ENCODE measurements at regions of chr12 and their contacts with region 1.

Region 1: DNA sequence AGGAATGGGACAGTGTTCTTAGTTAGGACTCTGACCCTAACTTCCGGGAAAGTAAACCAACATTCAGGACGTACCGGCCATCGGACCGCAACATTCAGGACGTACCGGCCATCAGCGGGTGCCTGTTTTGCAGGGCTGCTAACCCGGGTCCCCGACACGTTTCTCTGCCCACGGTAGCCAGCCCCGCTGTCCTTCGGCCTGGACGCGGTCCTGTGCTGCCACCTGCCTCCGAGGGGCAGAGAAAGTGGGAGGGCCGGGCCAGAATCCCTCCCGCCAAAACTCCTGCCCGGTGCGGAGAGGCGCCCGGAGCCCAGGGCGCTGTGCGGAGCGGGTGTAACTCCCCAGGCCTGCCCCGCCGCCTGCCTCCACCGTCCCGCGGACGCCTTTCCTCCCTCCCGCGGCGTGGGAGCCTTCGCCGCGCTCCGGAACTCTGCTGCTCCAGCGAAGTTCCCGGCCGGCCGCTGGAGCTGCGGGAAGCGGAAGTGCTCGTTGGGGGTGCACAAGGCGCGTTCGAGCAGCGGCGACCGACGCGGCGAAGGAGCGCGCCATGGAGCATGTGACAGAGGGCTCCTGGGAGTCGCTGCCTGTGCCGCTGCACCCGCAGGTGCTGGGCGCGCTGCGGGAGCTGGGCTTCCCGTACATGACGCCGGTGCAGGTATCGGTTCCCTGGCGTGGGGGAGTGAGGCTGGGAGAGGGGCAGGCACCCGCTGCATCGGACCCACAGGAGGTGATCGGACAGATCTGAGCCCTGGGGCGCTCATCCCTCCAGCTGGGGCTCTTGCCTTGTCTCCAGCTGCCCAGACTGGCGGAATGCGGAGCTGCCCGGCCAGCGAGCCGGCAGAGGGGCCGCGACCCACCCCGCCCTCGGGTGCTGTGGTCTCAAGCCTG is at the start of gene DDX55:
- DNase-seq: peak; percentile 89
- ATAC-seq: peak; percentile 95
- H3K4me3 Mint-ChIP-seq: peak within 1 kb of the TSS; percentile 90
- H3K27ac Mint-ChIP-seq: peak within 1 kb of the TSS; percentile 98
- H3K4me1 Mint-ChIP-seq: peaks cover 39% of the 10 kb centered on the region
- H3K27me3 Mint-ChIP-seq: no peaks in the 10 kb centered on the region
- total RNA-seq, gene DDX55: 44.7 to 44.8 TPM

Region 2: DNA sequence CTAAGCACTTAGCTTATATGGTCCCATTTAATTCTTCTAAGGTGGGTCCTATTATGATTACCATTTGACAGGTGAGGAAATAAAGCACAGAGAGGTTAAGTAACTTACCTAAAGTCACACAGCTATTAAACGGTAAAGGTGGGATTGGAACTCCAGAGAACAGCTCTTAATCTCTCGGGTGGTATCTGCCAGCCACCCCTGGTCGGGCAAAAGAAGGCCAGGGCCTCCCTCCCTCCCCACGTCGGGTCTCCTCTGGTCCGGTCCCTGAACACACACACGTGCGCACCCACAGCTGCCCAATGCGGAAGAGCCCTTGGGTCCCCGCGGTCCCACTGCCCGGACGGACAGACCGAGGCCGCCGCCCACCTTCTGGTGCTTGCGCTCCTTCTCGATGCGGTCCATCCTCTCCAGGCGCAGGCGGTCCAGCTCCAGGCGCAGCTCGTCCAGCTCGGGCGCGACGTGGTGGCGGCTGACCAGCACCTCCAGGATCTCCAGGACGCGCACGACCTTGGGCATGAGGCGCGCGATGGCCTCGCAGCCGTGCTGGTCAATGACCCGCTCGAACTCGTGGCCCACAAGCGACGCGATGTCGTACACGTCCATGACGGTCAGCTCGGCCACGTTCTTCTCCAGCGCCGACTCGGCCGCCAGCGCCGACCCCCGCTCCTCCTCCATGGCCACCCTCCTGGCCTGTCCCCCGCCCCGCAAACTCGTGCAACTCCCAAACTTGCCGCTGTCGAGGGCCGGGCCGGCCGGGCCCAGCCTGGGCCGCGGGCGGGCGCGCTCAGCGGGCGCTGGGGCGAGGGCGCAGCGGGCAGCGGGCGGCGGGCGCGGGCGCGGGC is 68.8 kb before region 1 on chr12:
- CTCF ChIA-PET with region 1: no interaction called
- POLR2A ChIA-PET with region 1: no interaction called
- DNase-seq: peak; percentile 26
- ATAC-seq: peak; percentile 50
- H3K4me3 Mint-ChIP-seq: peak overlapping the region; percentile 74
- H3K27ac Mint-ChIP-seq: peak overlapping the region; percentile 43
- H3K4me1 Mint-ChIP-seq: peaks cover 17% of the 10 kb centered on the region
- H3K27me3 Mint-ChIP-seq: peaks cover 8% of the 10 kb centered on the region

Region 3: DNA sequence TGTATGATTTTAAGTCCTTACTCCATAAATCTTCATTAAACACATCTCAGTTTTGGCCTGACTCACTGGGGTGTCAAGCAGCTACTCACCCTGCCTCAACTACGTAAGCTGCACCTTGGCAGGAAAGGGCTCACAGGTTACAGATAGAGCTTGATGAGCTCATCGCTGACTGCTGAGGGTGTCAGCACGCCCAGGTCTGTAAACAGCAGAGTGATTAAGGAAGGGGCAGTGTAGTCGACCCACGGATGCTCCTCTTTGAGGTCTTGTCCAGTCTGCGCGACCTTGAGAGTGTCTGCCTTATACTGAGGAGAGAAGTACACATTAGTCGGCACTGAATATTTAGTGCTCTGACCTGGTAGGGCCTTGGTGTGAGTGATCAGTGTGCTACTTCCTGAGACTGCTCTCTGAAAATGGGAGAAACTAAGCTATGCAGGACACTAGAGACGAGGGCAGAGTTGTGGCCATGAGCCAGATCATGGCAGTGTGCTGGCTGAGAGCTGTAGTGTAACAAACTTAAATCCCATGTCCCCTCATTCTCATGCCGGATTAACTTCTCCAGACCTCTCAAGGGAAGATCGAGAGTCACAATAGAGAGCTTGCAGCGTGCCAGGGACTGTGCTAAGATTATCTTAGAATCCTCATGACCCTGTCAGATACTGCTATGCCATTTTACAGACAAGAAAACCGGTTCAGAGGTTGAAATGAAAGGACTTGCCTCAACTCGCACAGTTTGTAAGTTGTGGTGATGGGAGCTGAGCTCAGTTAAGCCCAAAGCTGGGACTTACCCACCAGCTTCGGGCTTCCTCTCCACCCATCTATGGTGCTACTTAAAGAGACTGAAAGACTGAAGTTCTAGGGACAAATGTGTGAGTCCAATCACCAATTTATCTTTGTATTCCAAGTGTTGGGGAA is 20.0 kb after region 1 on chr12:
- CTCF ChIA-PET with region 1: interaction called, 28 read pairs
- POLR2A ChIA-PET with region 1: interaction called, 5 read pairs
- DNase-seq: no peak
- ATAC-seq: no peak
- H3K4me3 Mint-ChIP-seq: no peak overlapping the region
- H3K27ac Mint-ChIP-seq: peak overlapping the region; percentile 3
- H3K4me1 Mint-ChIP-seq: no peaks in the 10 kb centered on the region
- H3K27me3 Mint-ChIP-seq: no peaks in the 10 kb centered on the region

Measured in activated CD8-positive, alpha-beta T cell treated with anti-CD3 and anti-CD28 coated beads, Interleukin-2, amount 10 ng/mL, durations not matched to agents 7 days and 5 days (primary cell).